Transverse colon (tissue), 4 donors: ENCODE measurements at regions of chr15 and their contacts with region 1.

Region 1: DNA sequence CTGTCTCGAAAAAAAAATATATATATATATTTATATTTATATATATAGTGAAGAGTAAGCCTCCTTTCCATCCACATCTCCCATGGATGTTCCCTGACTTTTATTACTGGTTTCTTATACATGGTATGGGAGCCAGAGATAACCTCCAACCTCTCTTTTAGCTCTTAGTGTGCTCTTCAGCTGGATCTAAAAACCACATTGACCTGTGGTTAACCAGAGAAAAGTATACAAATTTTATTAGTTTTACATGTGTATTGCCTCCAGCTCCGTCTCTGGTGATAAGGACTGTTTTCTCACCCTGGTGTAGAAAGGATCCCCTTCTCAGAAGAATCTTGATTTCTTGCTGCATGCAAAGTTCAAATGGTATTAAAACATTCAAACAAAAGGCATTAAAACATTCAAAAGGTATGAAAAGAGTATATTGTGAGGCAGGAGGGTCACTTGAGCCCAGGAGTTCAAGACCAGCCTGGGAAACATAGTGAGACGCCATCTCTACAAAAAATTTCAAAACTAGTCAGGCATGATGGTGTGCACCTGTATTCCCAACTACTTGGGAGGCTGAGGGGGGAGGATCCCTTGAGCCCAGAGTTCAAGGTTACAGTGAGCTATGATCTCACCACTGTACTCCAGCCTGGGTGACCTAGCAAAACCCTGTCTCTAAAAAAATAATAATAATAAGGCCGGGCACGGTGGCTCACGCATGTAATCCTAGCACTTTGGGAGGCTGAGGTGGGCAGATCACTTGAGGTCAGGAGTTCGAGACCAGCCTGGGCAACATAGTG is 13.5 kb upstream of the TTBK2 start:
- DNase-seq: no peak
- H3K4me3 ChIP-seq: no peak overlapping the region
- H3K27ac ChIP-seq: no peak overlapping the region
- H3K4me1 ChIP-seq: no peaks in the 10 kb centered on the region
- H3K27me3 ChIP-seq: no peaks in the 10 kb centered on the region
- CTCF ChIP-seq: no peak
- EP300 ChIP-seq: no peak
- POLR2A ChIP-seq: no peak

Region 2: GRCh38 chr15:42695527-42696071 is 238.5 kb before region 1 on chr15:
- in situ Hi-C with region 1: loop called in 3 of 4 experiments (anchors 10 kb)
- intact Hi-C with region 1: loop called (anchors 5 kb)
- DNase-seq: no peak
- H3K4me3 ChIP-seq: no peak overlapping the region
- H3K27ac ChIP-seq: no peak overlapping the region
- H3K4me1 ChIP-seq: no peaks in the 10 kb centered on the region
- H3K27me3 ChIP-seq: no peaks in the 10 kb centered on the region
- CTCF ChIP-seq: no peak
- EP300 ChIP-seq: no peak
- POLR2A ChIP-seq: no peak

Region 3: GRCh38 chr15:42796955-42797779 is 136.9 kb before region 1 on chr15:
- in situ Hi-C with region 1: loop called in 1 of 4 experiments (anchors 10 kb)
- intact Hi-C with region 1: no loop called
- DNase-seq: no peak
- H3K4me3 ChIP-seq: no peak overlapping the region
- H3K27ac ChIP-seq: no peak overlapping the region
- H3K4me1 ChIP-seq: no peaks in the 10 kb centered on the region
- H3K27me3 ChIP-seq: no peaks in the 10 kb centered on the region
- CTCF ChIP-seq: no peak
- EP300 ChIP-seq: no peak
- POLR2A ChIP-seq: no peak

Region 4: DNA sequence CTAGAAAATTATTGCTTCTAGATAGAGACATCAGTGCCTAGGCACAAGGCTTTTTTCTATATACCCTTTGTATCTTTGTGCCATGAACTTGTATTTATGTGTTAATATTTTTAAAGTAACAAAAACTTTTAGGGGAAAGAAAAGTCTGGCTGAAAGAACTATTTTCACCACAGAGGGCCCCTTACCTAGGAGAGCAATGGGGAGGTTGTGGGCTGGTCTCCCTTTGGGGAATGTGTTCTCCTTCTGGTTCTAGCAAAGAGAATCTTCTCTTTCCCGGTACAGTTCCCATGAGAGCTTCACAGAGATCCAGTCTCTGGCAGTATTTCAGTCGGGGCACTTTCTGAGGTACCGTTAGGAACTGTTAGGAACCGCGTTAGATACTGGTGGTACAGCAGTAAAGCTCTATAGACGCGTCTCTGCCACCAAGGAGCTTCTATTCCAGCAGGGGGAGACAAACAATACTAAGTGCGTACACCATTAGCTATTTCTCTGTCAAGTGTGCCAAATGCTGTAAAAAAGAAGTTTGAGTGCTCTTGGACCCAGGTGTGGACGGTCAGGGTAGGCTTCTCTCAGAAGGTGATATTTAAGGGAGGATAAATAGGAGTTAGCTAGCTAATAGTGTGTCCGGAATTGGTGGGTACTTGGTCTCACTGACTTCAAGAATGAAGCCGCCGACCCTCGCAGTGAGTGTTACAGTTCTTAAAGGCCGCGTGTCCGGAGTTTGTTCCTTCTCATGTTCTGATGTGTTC is 291.3 kb after region 1 on chr15:
- in situ Hi-C with region 1: no loop called
- intact Hi-C with region 1: no loop called
- DNase-seq: peak; percentile 18
- H3K4me3 ChIP-seq: no peak overlapping the region
- H3K27ac ChIP-seq: no peak overlapping the region
- H3K4me1 ChIP-seq: no peaks in the 10 kb centered on the region
- H3K27me3 ChIP-seq: no peaks in the 10 kb centered on the region
- CTCF ChIP-seq: peak; percentile 54 to 64 (median 60)
- EP300 ChIP-seq: no peak
- POLR2A ChIP-seq: no peak